T-cell (primary cell): ENCODE measurements at regions of chr9 and their contacts with region 1.

Region 1: GRCh38 chr9:107530679-107531078 is 41.1 kb upstream of the KLF4 start:
- DNase-seq: no peak
- ATAC-seq: no peak
- H3K4me3 ChIP-seq: no peak overlapping the region
- H3K4me3 Mint-ChIP-seq: no peak overlapping the region
- H3K27ac ChIP-seq: no peak overlapping the region
- H3K27ac Mint-ChIP-seq: no peak overlapping the region
- H3K4me1 ChIP-seq: no peaks in the 10 kb centered on the region
- H3K4me1 Mint-ChIP-seq: no peaks in the 10 kb centered on the region
- H3K27me3 ChIP-seq: peaks cover 0 to 8% of the 10 kb centered on the region in 2 experiments
- H3K27me3 Mint-ChIP-seq: no peaks in the 10 kb centered on the region

Region 2: GRCh38 chr9:107502464-107502863 is 28.2 kb before region 1 on chr9:
- CTCF ChIA-PET with region 1: no interaction called
- POLR2A ChIA-PET with region 1: no interaction called
- DNase-seq: no peak
- ATAC-seq: no peak
- H3K4me3 ChIP-seq: no peak overlapping the region
- H3K4me3 Mint-ChIP-seq: no peak overlapping the region
- H3K27ac ChIP-seq: no peak overlapping the region
- H3K27ac Mint-ChIP-seq: no peak overlapping the region
- H3K4me1 ChIP-seq: no peaks in the 10 kb centered on the region
- H3K4me1 Mint-ChIP-seq: no peaks in the 10 kb centered on the region
- H3K27me3 ChIP-seq: peaks cover 0 to 3% of the 10 kb centered on the region in 2 experiments
- H3K27me3 Mint-ChIP-seq: peaks cover 4 to 5% of the 10 kb centered on the region in 2 donors

Region 3: GRCh38 chr9:107513464-107514100 is 17.1 kb before region 1 on chr9:
- CTCF ChIA-PET with region 1: interaction called in 1 of 2 experiments, 10 read pairs
- POLR2A ChIA-PET with region 1: interaction called in 1 of 2 experiments, 5 read pairs
- DNase-seq: no peak
- ATAC-seq: no peak
- H3K4me3 ChIP-seq: no peak overlapping the region
- H3K4me3 Mint-ChIP-seq: no peak overlapping the region
- H3K27ac ChIP-seq: no peak overlapping the region
- H3K27ac Mint-ChIP-seq: no peak overlapping the region
- H3K4me1 ChIP-seq: no peaks in the 10 kb centered on the region
- H3K4me1 Mint-ChIP-seq: no peaks in the 10 kb centered on the region
- H3K27me3 ChIP-seq: peaks cover 0 to 3% of the 10 kb centered on the region in 2 experiments
- H3K27me3 Mint-ChIP-seq: peaks cover 2 to 9% of the 10 kb centered on the region in 2 donors